Activated CD4-positive, alpha-beta memory T cell treated with anti-CD3 and anti-CD28 coated beads for 36 hours (primary cell): ENCODE measurements at regions of chr12 and their contacts with region 1.

Region 1: DNA sequence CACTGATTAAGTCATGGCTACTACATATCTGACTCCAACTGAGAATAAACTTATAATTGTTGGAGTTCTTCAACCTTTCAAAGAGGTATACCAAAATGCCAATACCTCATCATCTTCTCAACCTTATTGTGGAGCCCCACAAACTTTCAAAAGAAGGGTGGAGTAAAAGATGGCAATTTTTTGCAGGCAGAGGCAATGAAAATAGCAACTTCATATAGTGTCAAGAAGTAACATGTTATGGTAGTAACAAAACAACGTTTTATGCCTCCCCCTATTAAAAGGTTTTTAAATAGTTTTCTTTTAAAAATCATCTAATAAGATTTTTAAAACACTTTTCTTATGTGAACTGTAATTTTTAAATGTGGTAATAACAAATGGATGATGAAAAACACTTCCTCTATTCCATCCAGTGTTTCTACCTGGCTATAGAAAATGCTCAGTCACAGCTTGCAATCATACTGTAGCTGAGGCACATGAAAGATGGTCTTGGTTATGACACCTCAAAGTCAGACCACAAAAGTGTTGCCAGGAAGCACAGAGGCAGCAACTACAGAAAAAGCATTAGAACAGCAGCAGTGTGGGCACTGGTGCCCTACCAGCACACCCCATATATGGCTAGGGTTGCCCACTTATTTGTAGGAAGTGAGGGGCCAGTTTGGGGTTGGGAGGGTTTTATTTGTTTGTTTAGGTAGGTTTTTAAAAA is 7.0 kb downstream of the PPP1R12A start:
- DNase-seq: peak; percentile 64
- H3K4me3 Mint-ChIP-seq: no peak overlapping the region
- H3K27ac Mint-ChIP-seq: peak overlapping the region; percentile 76
- H3K4me1 Mint-ChIP-seq: peaks cover 53% of the 10 kb centered on the region
- H3K27me3 Mint-ChIP-seq: no peaks in the 10 kb centered on the region

Region 2: DNA sequence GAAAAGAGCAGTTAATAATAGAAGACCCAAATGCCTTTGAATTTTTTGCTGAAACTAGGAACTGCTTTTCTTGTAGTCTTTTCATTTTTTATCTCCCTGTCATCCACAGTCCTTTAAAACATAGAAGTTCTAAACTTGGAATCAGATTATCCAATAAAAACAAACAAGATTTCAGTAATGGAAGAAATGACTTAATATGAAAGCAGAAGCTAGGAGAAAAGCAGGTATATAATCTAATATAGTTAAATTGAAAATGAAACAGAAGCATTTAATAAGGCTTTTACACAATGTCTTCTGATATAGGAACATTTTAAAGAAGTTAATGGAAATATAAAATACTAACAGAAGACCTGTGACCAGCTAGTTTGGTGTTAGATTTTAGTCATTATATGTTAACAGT is 19.6 kb before region 1 on chr12:
- CTCF ChIA-PET with region 1: no interaction called
- POLR2A ChIA-PET with region 1: no interaction called
- intact Hi-C with region 1: loop called (anchors 2 kb)
- DNase-seq: no peak
- H3K4me3 Mint-ChIP-seq: no peak overlapping the region
- H3K27ac Mint-ChIP-seq: no peak overlapping the region
- H3K4me1 Mint-ChIP-seq: peaks cover 46% of the 10 kb centered on the region
- H3K27me3 Mint-ChIP-seq: no peaks in the 10 kb centered on the region

Region 3: DNA sequence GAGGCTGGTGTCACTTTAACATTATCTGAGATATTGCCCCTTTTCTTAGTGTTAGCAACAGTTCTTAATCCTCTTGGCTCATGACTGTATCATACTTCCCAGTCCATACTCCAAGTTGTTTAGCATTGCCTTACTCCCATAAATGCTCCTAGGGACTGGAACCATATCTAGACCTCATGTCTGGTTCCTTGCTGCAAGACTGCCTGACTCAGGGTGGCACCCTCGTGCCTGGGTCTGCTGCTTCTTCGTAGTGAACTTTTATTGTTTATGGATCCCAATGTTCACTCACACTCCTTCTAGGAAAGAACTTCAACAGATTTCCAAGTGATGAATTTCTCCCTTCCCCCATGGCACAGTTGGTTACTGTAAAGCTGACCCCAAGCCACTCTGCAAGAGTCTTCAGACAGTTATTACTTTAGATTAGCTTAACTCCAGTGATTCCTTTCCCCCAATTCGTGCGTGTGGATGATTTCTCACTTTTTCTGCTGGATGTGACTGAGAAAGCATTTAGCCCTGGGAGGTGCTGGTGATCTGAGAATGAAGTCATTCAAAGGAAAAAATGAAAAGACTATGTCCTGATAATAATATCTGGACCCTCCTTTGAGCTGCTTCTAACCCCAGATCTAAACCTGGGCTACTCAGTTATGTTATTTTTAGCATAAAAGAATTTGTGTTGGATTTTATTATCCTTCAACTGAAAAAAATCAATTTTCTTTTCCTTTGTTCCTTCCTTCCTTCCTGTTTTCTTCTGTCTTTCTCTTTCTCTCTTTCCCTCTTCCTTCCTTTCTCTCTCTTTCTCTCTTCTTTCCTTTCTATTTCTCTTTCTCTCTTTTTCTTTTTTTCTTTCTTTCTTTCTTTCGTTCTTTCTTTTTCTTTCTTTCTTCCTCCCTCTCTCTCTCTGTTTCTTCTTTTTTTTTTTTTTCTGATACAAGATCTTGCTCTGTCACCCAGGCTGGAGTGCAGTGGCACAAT is 54.5 kb after region 1 on chr12:
- CTCF ChIA-PET with region 1: no interaction called
- POLR2A ChIA-PET with region 1: no interaction called
- intact Hi-C with region 1: no loop called
- DNase-seq: no peak
- H3K4me3 Mint-ChIP-seq: no peak overlapping the region
- H3K27ac Mint-ChIP-seq: no peak overlapping the region
- H3K4me1 Mint-ChIP-seq: no peaks in the 10 kb centered on the region
- H3K27me3 Mint-ChIP-seq: peaks cover 7% of the 10 kb centered on the region

Region 4: DNA sequence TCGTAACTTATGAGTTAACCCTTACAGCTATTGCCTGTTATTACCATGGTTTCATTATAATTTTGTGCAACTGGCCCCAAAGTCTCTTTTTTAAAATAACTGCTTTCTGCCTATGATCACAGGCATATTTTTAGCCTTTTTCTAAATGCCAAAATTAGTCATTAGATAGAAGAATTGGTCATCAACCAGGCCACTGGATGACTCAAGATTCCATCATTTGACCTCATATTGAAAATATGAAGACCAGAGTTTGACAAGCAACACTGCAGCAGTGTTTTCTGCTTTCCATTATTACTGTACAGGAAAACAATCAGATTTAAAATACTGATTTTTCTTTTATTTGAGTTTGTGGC is 116.7 kb after region 1 on chr12:
- CTCF ChIA-PET with region 1: no interaction called
- POLR2A ChIA-PET with region 1: no interaction called
- intact Hi-C with region 1: loop called (anchors 1 kb)
- DNase-seq: no peak
- H3K4me3 Mint-ChIP-seq: no peak overlapping the region
- H3K27ac Mint-ChIP-seq: no peak overlapping the region
- H3K4me1 Mint-ChIP-seq: peaks cover 4% of the 10 kb centered on the region
- H3K27me3 Mint-ChIP-seq: no peaks in the 10 kb centered on the region

Region 5: GRCh38 chr12:80154261-80154660 is 226.3 kb after region 1 on chr12:
- CTCF ChIA-PET with region 1: no interaction called
- POLR2A ChIA-PET with region 1: no interaction called
- intact Hi-C with region 1: no loop called
- DNase-seq: no peak
- H3K4me3 Mint-ChIP-seq: no peak overlapping the region
- H3K27ac Mint-ChIP-seq: no peak overlapping the region
- H3K4me1 Mint-ChIP-seq: peaks cover 4% of the 10 kb centered on the region
- H3K27me3 Mint-ChIP-seq: no peaks in the 10 kb centered on the region